MCF 10A (cell line): ENCODE measurements at regions of chr1 and their contacts with region 1.

Region 1: DNA sequence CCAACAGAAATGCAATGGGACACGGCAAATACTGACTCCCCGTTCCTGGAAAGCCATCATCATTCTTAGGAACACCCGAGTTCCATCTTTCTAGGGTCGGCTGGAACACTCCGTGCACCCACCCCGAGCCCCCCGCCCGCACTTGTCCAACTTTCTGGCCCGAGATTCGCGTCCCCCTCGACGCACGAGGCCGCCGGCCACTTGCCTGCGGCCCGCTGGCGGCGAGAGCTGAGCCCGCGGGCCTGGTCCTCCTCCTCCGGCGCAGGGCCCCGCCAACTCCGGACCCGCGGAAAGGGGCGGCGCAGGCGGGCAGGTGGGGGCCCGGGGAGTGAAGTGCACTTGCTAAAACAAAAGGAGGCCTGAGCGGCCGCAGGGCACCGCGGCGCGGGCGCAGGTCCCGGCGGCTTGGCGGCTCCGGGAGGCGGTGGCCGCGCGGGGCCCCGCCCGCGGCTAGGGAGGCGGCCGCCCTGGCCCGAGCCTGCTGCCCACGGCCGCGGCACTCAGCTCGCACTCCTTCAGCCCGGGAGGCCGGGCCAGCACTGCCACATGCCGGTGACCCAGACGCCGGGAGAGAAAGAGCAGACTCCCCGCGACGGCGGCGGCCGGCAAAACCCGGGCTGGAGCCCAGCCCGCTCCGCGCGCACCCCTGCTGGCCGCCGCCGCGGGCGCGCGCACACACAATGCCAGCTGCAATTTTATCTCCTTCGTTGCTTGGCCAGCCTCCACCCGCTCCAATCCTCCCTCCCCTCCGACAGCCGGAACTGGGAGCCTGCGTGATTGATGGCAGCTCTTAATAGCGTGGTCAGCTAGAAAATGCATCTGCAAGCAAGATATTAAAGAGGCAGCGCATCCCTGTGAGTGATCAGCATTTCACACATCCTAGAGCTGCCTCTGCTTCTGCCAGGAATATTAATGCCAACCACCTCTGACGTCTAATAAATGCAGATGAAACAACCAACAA is 114.3 kb downstream of the RERE start:
- DNase-seq: peak; percentile 92
- H3K4me3 Mint-ChIP-seq: peak overlapping the region; percentile 79
- H3K27ac Mint-ChIP-seq: peak overlapping the region; percentile 90
- H3K4me1 Mint-ChIP-seq: peaks cover 28% of the 10 kb centered on the region
- H3K27me3 Mint-ChIP-seq: no peaks in the 10 kb centered on the region
- CTCF ChIP-seq: no peak

Region 2: DNA sequence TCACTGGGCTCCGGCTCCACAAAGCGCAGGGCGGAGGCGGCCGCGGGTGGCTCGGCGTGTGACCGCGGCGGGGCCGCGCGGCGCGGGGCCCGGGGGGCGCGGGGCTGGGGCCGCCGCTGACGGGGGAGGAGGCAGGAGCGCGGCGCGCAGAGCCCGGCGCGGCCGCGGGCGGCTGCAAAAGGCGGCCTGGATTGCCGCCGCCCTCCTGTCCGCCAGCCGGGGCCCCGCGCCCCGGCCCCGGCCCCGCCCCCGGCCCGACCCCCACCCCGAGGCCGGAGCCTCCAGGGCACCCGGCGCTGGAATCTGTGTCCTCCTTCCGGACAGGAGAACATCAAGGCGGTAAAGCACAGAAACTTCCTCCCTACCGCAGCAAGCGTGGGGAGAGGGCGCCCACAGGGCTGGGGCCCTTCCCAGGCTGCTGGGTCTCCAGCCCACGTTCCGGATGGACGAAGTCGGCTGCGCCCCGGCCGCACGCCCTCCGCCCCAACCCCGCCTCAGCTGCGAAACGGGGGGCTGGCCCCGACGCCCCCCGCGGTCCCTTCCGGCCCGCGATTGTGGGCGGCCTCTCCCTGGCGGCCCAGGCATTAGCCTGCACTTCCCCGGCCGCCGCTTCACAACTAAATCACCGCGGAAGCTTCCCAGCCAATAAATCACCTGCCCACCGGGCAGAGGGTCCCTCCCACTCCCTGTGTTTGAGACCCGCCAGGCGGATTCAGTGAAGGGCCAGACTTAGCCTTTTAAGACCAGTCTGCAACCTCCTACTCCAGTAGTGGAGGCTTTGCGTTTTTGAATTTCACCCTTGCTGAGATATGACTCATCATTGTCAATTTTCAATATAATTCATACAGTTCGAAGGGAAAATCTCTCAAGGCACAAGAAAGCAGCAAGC is 279.2 kb before region 1 on chr1:
- CTCF ChIA-PET with region 1: no interaction called
- POLR2A ChIA-PET with region 1: interaction called, 11 read pairs
- intact Hi-C with region 1: loop called (anchors 5 kb)
- DNase-seq: peak; percentile 45
- H3K4me3 Mint-ChIP-seq: no peak overlapping the region
- H3K27ac Mint-ChIP-seq: peak overlapping the region; percentile 52
- H3K4me1 Mint-ChIP-seq: peaks cover 6% of the 10 kb centered on the region
- H3K27me3 Mint-ChIP-seq: no peaks in the 10 kb centered on the region
- CTCF ChIP-seq: no peak

Region 3: DNA sequence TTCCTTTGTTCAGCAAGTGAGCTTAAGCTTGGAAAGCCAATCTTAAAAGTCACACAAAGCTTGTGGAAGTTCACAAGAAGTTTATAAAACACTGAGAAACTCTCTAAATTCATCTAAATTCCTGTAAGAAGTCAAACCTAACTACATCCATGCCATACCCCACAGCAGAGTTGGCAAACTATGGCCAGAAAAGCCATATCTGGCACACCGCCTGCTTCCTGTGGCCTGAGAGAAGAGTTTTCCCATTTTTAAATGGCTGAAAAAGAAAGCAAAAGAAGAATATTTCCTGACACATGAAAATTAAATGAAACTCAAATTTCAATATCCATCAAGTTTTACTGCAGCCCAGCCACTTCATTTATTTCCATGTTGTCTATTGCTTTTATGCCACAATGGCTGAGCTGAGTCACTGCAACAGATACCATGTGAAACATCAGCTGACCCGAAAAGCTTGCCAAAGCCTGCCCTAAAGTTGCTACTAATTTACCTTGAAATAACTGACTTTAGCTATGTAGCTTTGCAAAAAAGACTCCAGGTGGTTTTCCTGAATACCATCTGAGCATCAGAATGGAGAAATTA is 148.1 kb before region 1 on chr1:
- CTCF ChIA-PET with region 1: no interaction called
- POLR2A ChIA-PET with region 1: interaction called, 10 read pairs
- intact Hi-C with region 1: no loop called
- DNase-seq: peak; percentile 62
- H3K4me3 Mint-ChIP-seq: no peak overlapping the region
- H3K27ac Mint-ChIP-seq: peak overlapping the region; percentile 61
- H3K4me1 Mint-ChIP-seq: no peaks in the 10 kb centered on the region
- H3K27me3 Mint-ChIP-seq: no peaks in the 10 kb centered on the region
- CTCF ChIP-seq: no peak

Region 4: GRCh38 chr1:8660411-8660828 is 42.7 kb before region 1 on chr1:
- CTCF ChIA-PET with region 1: no interaction called
- POLR2A ChIA-PET with region 1: interaction called, 20 read pairs
- intact Hi-C with region 1: no loop called
- DNase-seq: peak; percentile 77
- H3K4me3 Mint-ChIP-seq: no peak overlapping the region
- H3K27ac Mint-ChIP-seq: no peak overlapping the region
- H3K4me1 Mint-ChIP-seq: no peaks in the 10 kb centered on the region
- H3K27me3 Mint-ChIP-seq: no peaks in the 10 kb centered on the region
- CTCF ChIP-seq: no peak

Region 5: GRCh38 chr1:8679395-8679800 is 23.7 kb before region 1 on chr1:
- CTCF ChIA-PET with region 1: interaction called, 6 read pairs
- POLR2A ChIA-PET with region 1: interaction called, 179 read pairs
- intact Hi-C with region 1: loop called (anchors 2 kb)
- DNase-seq: peak; percentile 27
- H3K4me3 Mint-ChIP-seq: no peak overlapping the region
- H3K27ac Mint-ChIP-seq: no peak overlapping the region
- H3K4me1 Mint-ChIP-seq: peaks cover 20% of the 10 kb centered on the region
- H3K27me3 Mint-ChIP-seq: no peaks in the 10 kb centered on the region
- CTCF ChIP-seq: no peak

Region 6: GRCh38 chr1:8727809-8728213 is 24.7 kb after region 1 on chr1:
- CTCF ChIA-PET with region 1: interaction called, 19 read pairs
- POLR2A ChIA-PET with region 1: interaction called, 54 read pairs
- intact Hi-C with region 1: no loop called
- DNase-seq: no peak
- H3K4me3 Mint-ChIP-seq: no peak overlapping the region
- H3K27ac Mint-ChIP-seq: no peak overlapping the region
- H3K4me1 Mint-ChIP-seq: peaks cover 9% of the 10 kb centered on the region
- H3K27me3 Mint-ChIP-seq: no peaks in the 10 kb centered on the region
- CTCF ChIP-seq: no peak

Region 7: GRCh38 chr1:8817406-8818324 is 114.5 kb after region 1 on chr1 and contains the start of gene RERE:
- CTCF ChIA-PET with region 1: interaction called, 5 read pairs
- POLR2A ChIA-PET with region 1: interaction called, 35 read pairs
- intact Hi-C with region 1: loop called (anchors 5 kb)
- DNase-seq: peak; percentile 93
- H3K4me3 Mint-ChIP-seq: peak within 1 kb of the TSS; percentile 84
- H3K27ac Mint-ChIP-seq: peak within 1 kb of the TSS; percentile 97
- H3K4me1 Mint-ChIP-seq: peaks cover 44% of the 10 kb centered on the region
- H3K27me3 Mint-ChIP-seq: no peaks in the 10 kb centered on the region
- CTCF ChIP-seq: no peak
- total RNA-seq, gene RERE: 36.8 and 48.4 TPM in 2 replicates